ENCODE measurements at regions of chr2 and their contacts with region 1.

Region 1: GRCh38 chr2:43877782-43878464 is 39.2 kb downstream of the ABCG8 start:
- DNase-seq: peak; percentile 72

Region 2: DNA sequence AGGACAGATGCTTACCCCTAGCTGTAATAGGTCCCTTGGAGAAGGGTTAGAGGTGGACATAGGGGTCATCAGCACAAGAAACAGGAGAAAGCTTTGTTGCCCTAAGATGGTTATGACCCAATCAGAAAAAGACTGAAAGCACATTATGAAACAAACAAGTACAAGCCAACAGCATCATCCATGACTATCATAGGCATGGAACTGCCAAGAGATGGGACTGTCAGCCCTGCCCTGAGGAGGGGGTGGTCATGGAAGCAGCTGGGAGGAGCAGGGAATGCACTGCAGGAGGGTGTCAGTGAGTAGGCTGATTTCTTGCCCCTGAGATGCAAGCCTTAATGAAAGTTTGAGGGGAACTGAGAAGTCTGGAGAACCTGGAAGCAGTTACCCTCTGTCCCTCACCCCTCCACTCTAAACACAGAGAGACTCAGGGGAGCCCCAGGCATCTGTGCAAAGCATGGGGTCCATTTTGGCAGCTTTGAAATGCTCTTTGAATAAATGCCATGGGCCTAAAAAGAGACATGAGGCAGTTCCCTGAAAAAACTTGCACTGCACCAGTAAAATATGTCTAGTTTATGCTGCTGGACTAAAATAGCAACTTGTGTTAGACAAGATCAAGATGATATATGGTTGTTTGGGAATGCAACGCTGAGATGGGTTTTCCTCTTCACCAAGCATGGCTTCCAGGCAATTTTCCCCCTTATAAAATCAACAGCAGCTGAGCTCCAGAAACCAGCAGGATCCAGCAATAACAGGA is 528.8 kb before region 1 on chr2:
- in situ Hi-C with region 1: no loop called
- DNase-seq: no peak

Region 3: GRCh38 chr2:43368483-43369385 is 509.2 kb before region 1 on chr2:
- in situ Hi-C with region 1: no loop called
- DNase-seq: no peak

Region 4: DNA sequence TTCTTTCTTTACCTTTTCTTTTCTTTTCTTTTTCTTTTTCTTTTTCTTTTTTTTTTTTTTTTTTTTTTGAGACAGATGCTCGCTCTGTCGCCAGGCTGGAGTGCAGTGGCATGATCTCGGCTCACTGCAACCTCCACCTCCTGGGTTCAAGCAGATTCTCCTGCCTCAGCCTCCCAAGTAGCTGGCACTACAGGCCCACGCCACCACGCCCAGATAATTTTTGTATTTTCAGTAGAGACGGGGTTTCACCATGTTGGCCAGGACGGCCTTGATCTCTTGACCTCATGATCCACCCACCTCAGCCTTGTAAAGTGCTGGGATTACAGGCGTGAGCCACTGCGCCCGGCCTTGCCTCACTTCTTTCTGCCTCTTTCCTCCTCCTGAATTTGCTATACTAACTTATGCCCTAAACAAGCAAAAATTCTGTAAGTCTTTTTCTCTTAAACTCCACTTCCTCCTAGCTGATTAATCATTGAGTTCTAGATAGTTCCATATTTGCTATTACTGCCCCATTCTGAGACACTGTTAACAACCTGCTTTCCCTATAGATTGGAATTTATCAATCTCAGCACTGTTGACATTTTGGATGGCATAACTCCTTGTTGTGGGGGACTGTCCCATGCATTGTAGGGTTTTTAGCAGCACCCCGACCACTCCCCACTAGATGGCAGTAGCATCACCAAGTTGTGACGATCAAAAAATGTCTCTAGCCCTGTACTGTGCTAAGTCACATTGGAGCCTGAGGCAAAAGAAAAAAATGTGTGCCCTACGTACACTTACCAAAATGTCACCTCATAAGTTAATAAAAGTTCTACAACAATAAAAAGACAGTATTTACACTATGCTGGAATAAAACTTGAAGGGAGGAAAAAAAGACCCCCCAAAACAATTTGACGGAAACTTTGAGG is 265.7 kb before region 1 on chr2:
- in situ Hi-C with region 1: loop called (anchors 25 kb)
- DNase-seq: peak; percentile 86

Measured in KBM-7 (cell line).